T-cell (primary cell): ENCODE measurements at regions of chr14 and their contacts with region 1.

Region 1: DNA sequence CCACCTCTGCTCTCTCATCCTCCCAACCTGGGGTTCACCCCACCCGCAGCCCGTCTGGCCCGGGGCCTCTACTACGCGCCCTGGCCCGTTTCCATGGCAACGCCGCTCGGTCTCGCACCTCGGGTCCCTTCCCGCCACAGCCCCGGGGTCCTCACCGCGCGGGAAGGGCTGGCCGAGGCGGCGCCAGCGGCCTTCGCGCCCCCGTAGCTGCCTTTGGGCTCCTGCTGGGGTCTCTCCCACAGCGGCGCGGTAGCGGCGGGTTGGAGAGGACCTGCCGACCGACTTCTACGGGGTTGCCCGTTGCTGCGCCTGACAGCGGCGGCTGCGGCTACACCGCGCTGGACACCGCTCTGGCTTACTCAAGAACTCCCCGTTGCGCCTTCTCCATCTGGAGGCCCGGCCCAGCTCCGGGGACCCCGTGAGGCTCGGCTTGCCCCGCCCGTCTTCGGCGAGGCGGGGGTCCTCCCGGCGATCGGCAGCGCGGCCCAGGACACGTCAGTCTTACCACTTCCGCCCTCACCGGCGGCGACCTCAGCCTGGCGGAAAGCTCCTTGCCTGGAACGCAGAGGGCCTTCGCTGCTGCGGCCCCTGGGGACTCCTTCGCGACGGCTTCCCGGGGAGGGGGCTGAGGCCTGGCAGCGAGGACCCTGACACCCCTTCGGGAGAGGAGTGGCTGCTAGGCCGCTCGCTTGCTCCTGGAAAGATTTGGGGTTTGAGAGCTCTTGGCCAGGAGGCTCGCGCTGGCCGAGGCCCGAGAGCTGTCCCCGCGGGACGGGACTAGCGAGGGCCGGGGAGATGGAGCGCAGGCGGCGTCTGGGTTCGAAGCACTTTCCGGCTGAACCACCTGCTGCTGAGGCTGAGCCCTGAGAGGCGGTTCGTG is at the start of gene TM9SF1:
- DNase-seq: peak; percentile 79 to 93 (median 89)
- ATAC-seq: peak; percentile 91 to 94 (median 93)
- H3K4me3 ChIP-seq: peak within 1 kb of the TSS; percentile 76 to 98
- H3K4me3 Mint-ChIP-seq: peak within 1 kb of the TSS; percentile 87 to 93 (median 92)
- H3K27ac ChIP-seq: peak within 1 kb of the TSS; percentile 98
- H3K27ac Mint-ChIP-seq: peak within 1 kb of the TSS; percentile 96 to 98
- H3K4me1 ChIP-seq: peaks cover 14 to 43% of the 10 kb centered on the region in 2 experiments
- H3K4me1 Mint-ChIP-seq: peaks cover 49 to 68% (median 57%) of the 10 kb centered on the region in 3 donors
- H3K27me3 ChIP-seq: no peaks in the 10 kb centered on the region
- H3K27me3 Mint-ChIP-seq: no peaks in the 10 kb centered on the region
- total RNA-seq, gene TM9SF1: 19.0 to 29.5 (median 21.8) TPM

Region 2: GRCh38 chr14:24013654-24014514 is 181.5 kb before region 1 on chr14:
- CTCF ChIA-PET with region 1: no interaction called
- POLR2A ChIA-PET with region 1: no interaction called
- DNase-seq: peak in 33 of 35 experiments; percentile 9 to 85 (median 35)
- ATAC-seq: peak; percentile 83 to 93 (median 88)
- H3K4me3 ChIP-seq: no peak overlapping the region
- H3K4me3 Mint-ChIP-seq: no peak overlapping the region
- H3K27ac ChIP-seq: no peak overlapping the region
- H3K27ac Mint-ChIP-seq: no peak overlapping the region
- H3K4me1 ChIP-seq: peaks cover 0 to 14% of the 10 kb centered on the region in 2 experiments
- H3K4me1 Mint-ChIP-seq: peaks cover 24 to 34% (median 28%) of the 10 kb centered on the region in 3 donors
- H3K27me3 ChIP-seq: no peaks in the 10 kb centered on the region
- H3K27me3 Mint-ChIP-seq: peaks cover 4 to 5% of the 10 kb centered on the region in 2 donors

Region 3: GRCh38 chr14:24207104-24207551 is 11.7 kb after region 1 on chr14:
- CTCF ChIA-PET with region 1: interaction called in 1 of 2 experiments, 12 read pairs
- POLR2A ChIA-PET with region 1: interaction called, 4 to 17 read pairs
- DNase-seq: peak in 3 of 35 experiments; percentile 25 to 40 (median 39)
- ATAC-seq: peak in 1 of 4 experiments; percentile 56
- H3K4me3 ChIP-seq: no peak overlapping the region
- H3K4me3 Mint-ChIP-seq: no peak overlapping the region
- H3K27ac ChIP-seq: peak overlapping the region; percentile 15
- H3K27ac Mint-ChIP-seq: peak overlapping the region in 1 of 2 donors; percentile 83
- H3K4me1 ChIP-seq: peaks cover 8 to 20% of the 10 kb centered on the region in 2 experiments
- H3K4me1 Mint-ChIP-seq: peaks cover 40 to 61% (median 54%) of the 10 kb centered on the region in 3 donors
- H3K27me3 ChIP-seq: no peaks in the 10 kb centered on the region
- H3K27me3 Mint-ChIP-seq: no peaks in the 10 kb centered on the region

Region 4: DNA sequence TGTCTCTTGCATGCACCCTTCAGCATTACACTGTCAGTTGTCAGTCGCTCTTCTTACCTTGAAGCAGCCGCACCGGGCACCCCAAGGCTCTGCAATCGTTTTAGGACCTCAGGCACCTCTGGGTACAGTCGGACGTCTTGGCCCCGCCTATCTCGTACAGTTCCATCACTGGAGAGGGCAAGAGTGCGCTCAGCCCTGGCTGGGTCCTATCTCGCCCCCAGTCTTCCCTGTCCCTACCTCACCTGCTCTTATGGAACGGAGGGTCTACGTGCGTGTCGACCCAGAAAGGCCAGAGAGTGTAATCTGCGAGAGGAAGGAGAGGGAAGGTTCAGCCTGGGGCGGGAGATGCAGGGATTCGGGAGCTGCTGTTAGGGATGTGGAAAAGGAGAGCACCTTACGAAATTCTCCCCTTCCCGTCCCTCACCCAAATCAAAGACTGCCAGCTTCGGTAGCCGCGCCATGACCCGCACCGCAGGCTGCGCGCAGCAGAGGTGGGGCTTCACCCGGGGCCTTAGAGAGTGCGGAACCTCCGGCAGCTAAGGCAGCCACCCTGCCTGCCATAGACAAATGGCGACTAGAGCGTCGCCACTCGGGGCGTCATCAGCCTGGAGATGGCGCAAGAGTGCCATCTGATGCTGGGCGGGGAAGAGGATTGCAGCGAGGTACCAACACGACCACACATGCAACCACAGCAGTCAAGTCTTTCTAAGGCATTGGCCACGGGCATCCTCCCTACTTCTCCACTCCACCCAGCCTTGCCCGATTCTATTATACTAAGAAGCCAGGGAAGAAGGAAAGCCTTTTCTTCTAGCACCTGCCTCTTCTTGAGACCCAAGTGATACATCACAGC is 20.3 kb after region 1 on chr14 and contains the start of gene MDP1:
- CTCF ChIA-PET with region 1: interaction called, 4 to 5 read pairs
- POLR2A ChIA-PET with region 1: interaction called, 4 to 17 read pairs
- DNase-seq: peak; percentile 73 to 96 (median 85)
- ATAC-seq: peak; percentile 74 to 82 (median 80)
- H3K4me3 ChIP-seq: peak within 1 kb of the TSS; percentile 67 to 89
- H3K4me3 Mint-ChIP-seq: peak within 1 kb of the TSS; percentile 86 to 93 (median 92)
- H3K27ac ChIP-seq: peak within 1 kb of the TSS; percentile 86
- H3K27ac Mint-ChIP-seq: peak within 1 kb of the TSS; percentile 95 to 97
- H3K4me1 ChIP-seq: peaks cover 21 to 45% of the 10 kb centered on the region in 2 experiments
- H3K4me1 Mint-ChIP-seq: peaks cover 42 to 54% (median 50%) of the 10 kb centered on the region in 3 donors
- H3K27me3 ChIP-seq: no peaks in the 10 kb centered on the region
- H3K27me3 Mint-ChIP-seq: no peaks in the 10 kb centered on the region
- total RNA-seq, gene MDP1: 7.2 to 17.5 (median 12.1) TPM